AG04450 (cell line): ENCODE measurements at regions of chr15 and their contacts with region 1.

Region 1: GRCh38 chr15:73660455-73660854 is 23.7 kb upstream of the CD276 start:
- DNase-seq: no peak
- H3K4me3 ChIP-seq: no peak overlapping the region
- H3K27ac ChIP-seq: no peak overlapping the region
- H3K27me3 ChIP-seq: peaks cover 19% of the 10 kb centered on the region
- CTCF ChIP-seq: no peak

Region 2: DNA sequence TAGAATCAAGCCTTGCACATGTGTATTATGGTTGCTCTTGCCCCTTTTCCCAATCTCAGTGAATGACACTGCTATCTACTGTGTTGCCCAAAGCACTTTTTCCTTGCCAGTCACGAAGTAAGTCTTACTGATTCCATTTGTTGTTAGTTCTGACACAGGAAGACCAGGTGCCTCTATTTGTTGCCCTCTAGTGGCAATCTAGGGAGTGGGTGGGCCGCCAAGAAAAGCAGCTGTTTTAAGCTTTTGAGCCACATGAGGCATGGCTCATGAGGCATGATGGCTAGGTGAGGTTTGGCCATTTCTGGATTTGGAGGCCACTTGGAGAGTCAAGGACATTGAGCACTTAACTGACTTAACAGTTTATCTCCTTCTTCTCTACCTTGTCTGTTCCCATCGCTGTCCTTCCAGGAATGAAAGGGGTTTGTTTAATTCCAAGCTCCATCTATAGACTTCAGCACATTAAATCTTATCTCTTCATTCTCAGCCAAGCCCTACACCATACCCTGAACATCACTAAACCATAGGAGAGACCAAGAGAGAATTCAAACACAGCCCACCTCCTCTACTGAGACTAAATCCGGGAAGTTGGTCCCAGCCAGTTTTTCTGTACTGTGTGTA is 394.8 kb before region 1 on chr15:
- CTCF ChIA-PET with region 1: no interaction called
- POLR2A ChIA-PET with region 1: no interaction called
- DNase-seq: peak; percentile 6
- H3K4me3 ChIP-seq: no peak overlapping the region
- H3K27ac ChIP-seq: no peak overlapping the region
- H3K27me3 ChIP-seq: no peaks in the 10 kb centered on the region
- CTCF ChIP-seq: peak; percentile 76

Region 3: DNA sequence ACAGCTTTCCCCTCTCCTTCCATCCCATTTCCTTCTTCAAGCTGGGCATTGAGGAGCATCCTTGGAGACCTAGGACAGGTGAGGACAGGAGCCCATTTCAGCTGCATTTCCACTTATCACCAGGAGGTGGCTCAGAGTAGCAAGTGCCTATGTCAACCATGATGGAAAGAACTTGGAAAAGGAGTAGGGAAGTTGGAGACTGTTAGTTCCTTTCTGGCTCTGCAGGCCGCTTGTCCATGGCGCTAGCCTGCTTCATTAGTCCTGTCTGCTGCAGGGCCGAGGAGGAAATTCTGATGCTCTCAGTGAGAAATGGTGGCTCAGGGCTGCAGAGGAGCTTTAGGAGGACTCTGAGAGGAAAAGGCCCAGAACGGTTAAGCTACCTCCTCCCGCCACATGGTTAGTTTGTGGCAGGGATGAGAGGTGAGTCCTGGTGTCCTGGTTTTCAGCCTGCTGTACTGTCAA is 16.7 kb after region 1 on chr15:
- CTCF ChIA-PET with region 1: interaction called, 17 read pairs
- POLR2A ChIA-PET with region 1: no interaction called
- DNase-seq: no peak
- H3K4me3 ChIP-seq: no peak overlapping the region
- H3K27ac ChIP-seq: no peak overlapping the region
- H3K27me3 ChIP-seq: peaks cover 27% of the 10 kb centered on the region
- CTCF ChIP-seq: peak; percentile 86